H1 (cell line): ENCODE measurements at regions of chr1 and their contacts with region 1.

Region 1: GRCh38 chr1:160777486-160778089 is 18.4 kb upstream of the LY9 start:
- DNase-seq: peak in 1 of 2 experiments; percentile 70
- H3K4me3 ChIP-seq: no peak overlapping the region
- H3K27ac ChIP-seq: no peak overlapping the region
- H3K4me1 ChIP-seq: no peaks in the 10 kb centered on the region
- H3K27me3 ChIP-seq: no peaks in the 10 kb centered on the region
- CTCF ChIP-seq: peak; percentile 26 to 71 (median 67)
- EP300 ChIP-seq: no peak
- POLR2A ChIP-seq: no peak
- RAD21 ChIP-seq: peak; percentile 67 to 70

Region 2: DNA sequence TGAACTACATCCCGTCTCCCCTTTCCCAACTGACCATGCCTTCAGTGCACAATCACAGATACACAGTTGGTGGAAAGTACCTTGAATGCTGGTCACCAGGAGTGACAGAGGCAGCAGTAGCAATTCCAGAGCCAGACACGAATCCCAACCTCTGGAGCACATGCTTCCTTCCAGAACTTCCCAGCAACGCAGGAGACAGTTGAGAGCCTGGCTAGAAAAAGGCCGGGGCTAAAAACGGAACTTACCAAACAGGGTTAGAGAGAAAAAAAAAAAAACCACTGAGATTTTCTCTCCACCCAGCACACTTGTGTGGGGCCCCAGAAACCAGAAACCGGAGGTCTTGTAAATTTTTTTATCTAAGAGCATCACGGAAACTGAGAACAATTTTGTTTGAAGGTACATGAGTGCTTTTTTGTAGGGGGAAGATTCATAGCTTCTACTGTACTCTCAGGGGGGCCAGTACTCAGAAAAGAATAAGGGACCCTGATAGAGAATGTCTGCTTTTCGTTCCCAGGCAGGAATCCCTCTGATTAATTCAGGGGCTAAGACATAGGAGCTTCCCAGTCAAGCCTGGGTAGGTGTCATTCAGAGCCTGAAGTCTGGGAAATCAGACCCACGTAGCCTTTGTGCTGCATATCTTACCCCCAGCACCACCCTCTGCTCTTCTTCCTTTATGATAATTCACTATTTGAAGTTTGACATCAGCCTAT is 65.8 kb before region 1 on chr1 and contains the start of gene CD48:
- CTCF ChIA-PET with region 1: interaction called, 16 read pairs
- POLR2A ChIA-PET with region 1: no interaction called
- DNase-seq: no peak
- H3K4me3 ChIP-seq: no peak within 1 kb of the TSS
- H3K27ac ChIP-seq: no peak within 1 kb of the TSS
- H3K4me1 ChIP-seq: no peaks in the 10 kb centered on the region
- H3K27me3 ChIP-seq: no peaks in the 10 kb centered on the region
- CTCF ChIP-seq: no peak
- EP300 ChIP-seq: no peak
- POLR2A ChIP-seq: no peak
- RAD21 ChIP-seq: no peak
- total RNA-seq, gene CD48: not detected in 2 replicates

Region 3: GRCh38 chr1:160755911-160756848 is 21.4 kb before region 1 on chr1:
- CTCF ChIA-PET with region 1: interaction called, 141 read pairs
- POLR2A ChIA-PET with region 1: no interaction called
- DNase-seq: no peak
- H3K4me3 ChIP-seq: no peak overlapping the region
- H3K27ac ChIP-seq: no peak overlapping the region
- H3K4me1 ChIP-seq: no peaks in the 10 kb centered on the region
- H3K27me3 ChIP-seq: no peaks in the 10 kb centered on the region
- CTCF ChIP-seq: no peak
- EP300 ChIP-seq: no peak
- POLR2A ChIP-seq: no peak
- RAD21 ChIP-seq: no peak

Region 4: DNA sequence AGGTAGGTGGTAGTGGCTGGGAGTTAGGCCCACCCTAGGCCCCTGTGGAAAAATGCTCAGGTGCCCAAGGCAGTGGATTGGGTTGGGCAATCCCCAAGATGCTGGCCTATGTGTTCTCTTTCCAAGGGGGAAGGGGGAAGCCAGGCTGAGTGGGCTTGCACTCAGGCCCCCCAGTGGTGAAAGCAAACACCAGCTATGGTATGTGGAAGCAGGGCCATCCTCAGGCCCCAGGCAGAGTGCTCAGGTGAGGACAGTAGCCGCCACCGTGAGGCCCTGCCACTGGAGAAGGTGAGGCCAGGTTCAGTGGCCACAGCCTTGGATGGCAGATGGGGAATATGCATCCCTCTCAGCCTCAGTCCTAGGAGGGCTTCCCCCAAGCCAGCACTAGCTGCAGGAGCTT is 30.1 kb after region 1 on chr1:
- CTCF ChIA-PET with region 1: interaction called, 16 read pairs
- POLR2A ChIA-PET with region 1: no interaction called
- DNase-seq: no peak
- H3K4me3 ChIP-seq: no peak overlapping the region
- H3K27ac ChIP-seq: no peak overlapping the region
- H3K4me1 ChIP-seq: peaks cover 0 to 7% (median 2%) of the 10 kb centered on the region in 4 experiments; a peak in 3 of 7 replicates
- H3K27me3 ChIP-seq: no peaks in the 10 kb centered on the region
- CTCF ChIP-seq: peak in 2 of 3 experiments; percentile 14 to 17; a peak in 2 of 4 replicates
- EP300 ChIP-seq: no peak
- POLR2A ChIP-seq: no peak
- RAD21 ChIP-seq: no peak

Region 5: GRCh38 chr1:160837558-160838205 is 60.1 kb after region 1 on chr1:
- CTCF ChIA-PET with region 1: interaction called, 32 read pairs
- POLR2A ChIA-PET with region 1: no interaction called
- DNase-seq: no peak
- H3K4me3 ChIP-seq: no peak overlapping the region
- H3K27ac ChIP-seq: no peak overlapping the region
- H3K4me1 ChIP-seq: peaks cover 0 to 3% (median 0%) of the 10 kb centered on the region in 4 experiments; a peak in 2 of 7 replicates
- H3K27me3 ChIP-seq: no peaks in the 10 kb centered on the region; a peak in 1 of 7 replicates
- CTCF ChIP-seq: no peak
- EP300 ChIP-seq: no peak
- POLR2A ChIP-seq: no peak
- RAD21 ChIP-seq: no peak